Common myeloid progenitor, CD34-positive (primary cell): ENCODE measurements at regions of chr1 and their contacts with region 1.

Region 1: GRCh38 chr1:51729824-51730301 is 113.0 kb downstream of the OSBPL9 start:
- DNase-seq: peak; percentile 22 to 70 (median 54)
- H3K4me3 ChIP-seq: peak overlapping the region; percentile 58 to 94 (median 86)
- H3K27ac ChIP-seq: peak overlapping the region; percentile 64 to 90
- H3K4me1 ChIP-seq: peaks cover 9 to 29% (median 22%) of the 10 kb centered on the region in 4 experiments
- H3K27me3 ChIP-seq: no peaks in the 10 kb centered on the region

Region 2: DNA sequence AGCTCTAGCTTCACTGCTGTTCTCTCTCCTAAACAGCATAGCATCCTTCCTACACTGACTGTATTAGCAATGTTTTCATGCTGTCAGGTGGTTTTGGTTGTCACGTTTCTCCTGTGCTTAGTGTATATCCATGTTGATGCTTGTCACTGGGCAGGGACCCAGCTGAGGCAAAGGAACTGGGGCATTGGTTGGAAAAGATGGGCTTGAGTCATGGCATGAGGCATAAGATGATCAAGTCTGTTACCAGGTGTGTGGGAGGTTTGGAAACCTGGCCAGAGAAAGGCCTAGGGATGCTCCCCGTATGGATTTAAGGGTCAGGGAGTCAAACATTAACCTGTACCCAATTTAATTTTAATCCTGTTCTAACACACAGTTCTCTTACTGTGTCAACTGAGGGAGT is 43.4 kb before region 1 on chr1:
- CTCF ChIA-PET with region 1: no interaction called
- POLR2A ChIA-PET with region 1: no interaction called
- DNase-seq: no peak
- H3K4me3 ChIP-seq: no peak overlapping the region
- H3K27ac ChIP-seq: no peak overlapping the region
- H3K4me1 ChIP-seq: peaks cover 0 to 13% (median 6%) of the 10 kb centered on the region in 4 experiments
- H3K27me3 ChIP-seq: no peaks in the 10 kb centered on the region

Region 3: DNA sequence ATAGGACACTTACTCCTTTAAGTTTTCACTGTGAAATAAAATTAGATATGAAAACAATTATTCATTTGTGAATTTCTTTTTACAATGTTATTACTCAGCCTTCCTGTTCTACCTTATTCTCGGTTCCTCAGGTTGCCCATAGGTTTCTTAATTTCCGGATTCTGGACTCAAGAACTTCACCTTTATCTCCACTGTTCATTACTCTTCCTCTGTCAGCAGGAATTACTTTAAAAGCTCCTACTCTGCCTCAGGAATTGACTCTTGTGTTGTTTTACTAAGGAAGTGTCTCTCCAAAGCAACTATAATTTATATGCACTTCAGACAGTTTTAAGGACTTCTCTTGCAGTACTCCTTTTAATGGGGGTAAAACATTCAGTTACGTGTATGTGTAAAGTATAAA is 10.8 kb after region 1 on chr1:
- CTCF ChIA-PET with region 1: interaction called, 12 read pairs
- POLR2A ChIA-PET with region 1: interaction called, 4 read pairs
- DNase-seq: no peak
- H3K4me3 ChIP-seq: no peak overlapping the region
- H3K27ac ChIP-seq: no peak overlapping the region
- H3K4me1 ChIP-seq: peaks cover 0 to 21% (median 10%) of the 10 kb centered on the region in 4 experiments
- H3K27me3 ChIP-seq: no peaks in the 10 kb centered on the region

Region 4: DNA sequence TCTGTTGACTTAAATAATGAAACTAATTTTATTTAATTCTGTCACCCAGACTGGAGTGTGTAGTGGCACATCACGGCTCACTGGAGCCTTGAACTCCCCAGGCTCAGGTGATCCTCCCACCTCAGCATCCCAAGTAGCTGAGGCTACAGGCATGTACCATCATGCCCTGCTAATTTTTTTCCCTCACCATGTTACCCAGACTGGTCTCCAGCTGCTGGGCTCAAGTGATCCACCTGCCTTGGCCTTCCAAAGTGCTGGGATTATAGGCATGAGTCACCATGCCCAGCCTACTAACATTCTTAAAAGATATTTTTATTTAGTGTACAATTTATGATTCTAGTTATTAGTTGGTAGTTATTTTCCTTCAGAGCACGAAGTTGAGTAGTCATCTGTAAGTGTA is 99.2 kb after region 1 on chr1:
- CTCF ChIA-PET with region 1: no interaction called
- POLR2A ChIA-PET with region 1: no interaction called
- DNase-seq: no peak
- H3K4me3 ChIP-seq: no peak overlapping the region
- H3K27ac ChIP-seq: no peak overlapping the region
- H3K4me1 ChIP-seq: no peaks in the 10 kb centered on the region
- H3K27me3 ChIP-seq: no peaks in the 10 kb centered on the region